IMR-90 (cell line): ENCODE measurements at regions of chr6 and their contacts with region 1.

Region 1: GRCh38 chr6:85756982-85757381 is 114.3 kb upstream of the SYNCRIP start:
- DNase-seq: peak; percentile 44
- ATAC-seq: no peak
- H3K4me3 ChIP-seq: no peak overlapping the region
- H3K27ac ChIP-seq: no peak overlapping the region
- H3K4me1 ChIP-seq: no peaks in the 10 kb centered on the region
- H3K27me3 ChIP-seq: no peaks in the 10 kb centered on the region; the same call in 1 of the 2 replicates
- CTCF ChIP-seq: peak; percentile 77
- POLR2A ChIP-seq: no peak
- RAD21 ChIP-seq: peak; percentile 70

Region 2: DNA sequence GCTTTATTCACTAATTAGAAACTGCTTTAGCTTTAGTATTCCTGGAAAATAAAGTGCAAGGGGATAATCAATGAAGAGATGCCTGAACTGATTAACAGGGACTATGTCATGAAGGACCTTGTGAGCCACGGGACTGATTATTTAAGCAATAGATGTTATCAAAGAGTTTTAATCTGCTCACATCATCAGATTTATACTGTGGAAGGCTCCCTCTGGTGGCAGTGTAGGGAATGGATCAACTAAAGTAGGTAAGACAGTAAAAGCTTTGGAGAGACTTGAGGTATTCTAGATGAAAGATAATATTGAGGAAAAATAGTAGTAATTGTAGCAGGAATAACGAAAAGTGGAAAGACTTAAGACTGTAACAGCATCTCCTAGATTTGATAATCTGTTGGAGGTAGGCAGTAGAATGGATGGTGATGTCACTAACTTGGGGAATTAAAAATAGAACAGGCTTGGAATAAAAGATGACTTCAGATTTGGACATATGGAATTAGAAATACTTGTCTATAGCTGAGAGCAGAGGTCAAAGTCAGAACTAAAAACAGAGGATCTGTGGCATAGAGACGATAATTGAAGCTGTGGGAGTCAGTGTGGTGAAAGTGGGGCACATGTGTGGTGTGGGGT is 1100.1 kb after region 1 on chr6:
- CTCF ChIA-PET with region 1: no interaction called
- POLR2A ChIA-PET with region 1: no interaction called
- dilution Hi-C with region 1: no loop called
- in situ Hi-C with region 1: loop called (anchors 25 kb)
- intact Hi-C with region 1: loop called (anchors 1 kb)
- DNase-seq: peak; percentile 28
- ATAC-seq: peak; percentile 46; the same call in 1 of the 2 replicates
- H3K4me3 ChIP-seq: no peak overlapping the region
- H3K27ac ChIP-seq: no peak overlapping the region
- H3K4me1 ChIP-seq: no peaks in the 10 kb centered on the region
- H3K27me3 ChIP-seq: no peaks in the 10 kb centered on the region
- CTCF ChIP-seq: peak; percentile 59
- POLR2A ChIP-seq: no peak
- RAD21 ChIP-seq: peak; percentile 42

Region 3: DNA sequence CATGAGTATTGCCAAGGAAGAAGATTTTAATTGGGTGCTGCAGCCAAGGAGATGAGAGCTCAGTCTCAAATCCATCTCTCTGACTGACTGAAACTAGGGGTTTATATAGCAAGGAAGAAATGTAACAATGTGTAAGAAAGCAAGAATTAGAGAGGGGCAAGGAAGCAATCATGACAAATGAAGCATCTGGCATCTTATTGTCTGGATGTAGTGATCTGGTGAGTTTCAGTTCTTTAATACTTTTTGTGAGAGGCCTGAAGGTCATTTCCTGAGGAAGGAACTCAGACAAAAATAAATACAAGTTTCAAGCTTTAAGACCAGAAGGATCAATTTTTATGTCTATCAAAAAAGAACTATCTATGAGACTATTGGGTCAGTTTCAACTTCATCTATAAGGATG is 1244.5 kb after region 1 on chr6:
- CTCF ChIA-PET with region 1: no interaction called
- POLR2A ChIA-PET with region 1: no interaction called
- dilution Hi-C with region 1: no loop called
- in situ Hi-C with region 1: loop called (anchors 25 kb)
- intact Hi-C with region 1: no loop called
- DNase-seq: no peak
- ATAC-seq: no peak
- H3K4me3 ChIP-seq: no peak overlapping the region
- H3K27ac ChIP-seq: no peak overlapping the region
- H3K4me1 ChIP-seq: no peaks in the 10 kb centered on the region
- H3K27me3 ChIP-seq: no peaks in the 10 kb centered on the region
- CTCF ChIP-seq: no peak
- POLR2A ChIP-seq: no peak
- RAD21 ChIP-seq: no peak

Region 4: GRCh38 chr6:87029711-87030314 is 1272.8 kb after region 1 on chr6:
- CTCF ChIA-PET with region 1: no interaction called
- POLR2A ChIA-PET with region 1: no interaction called
- dilution Hi-C with region 1: no loop called
- in situ Hi-C with region 1: no loop called
- intact Hi-C with region 1: loop called (anchors 2 kb)
- DNase-seq: peak; percentile 72
- ATAC-seq: peak; percentile 85
- H3K4me3 ChIP-seq: no peak overlapping the region
- H3K27ac ChIP-seq: no peak overlapping the region
- H3K4me1 ChIP-seq: no peaks in the 10 kb centered on the region
- H3K27me3 ChIP-seq: no peaks in the 10 kb centered on the region
- CTCF ChIP-seq: peak; percentile 60
- POLR2A ChIP-seq: no peak
- RAD21 ChIP-seq: peak; percentile 33